Calu3 (cell line): ENCODE measurements at regions of chr3 and their contacts with region 1.

Region 1: GRCh38 chr3:128879125-128879969 is at the start of gene ACAD9:
- DNase-seq: peak; percentile 100
- H3K4me3 Mint-ChIP-seq: peak within 1 kb of the TSS; percentile 81
- H3K27ac Mint-ChIP-seq: peak within 1 kb of the TSS; percentile 84
- H3K4me1 Mint-ChIP-seq: peaks cover 43% of the 10 kb centered on the region
- H3K27me3 Mint-ChIP-seq: peaks cover 12% of the 10 kb centered on the region
- CTCF ChIP-seq: no peak
- total RNA-seq, gene ACAD9: 112 and 124 TPM in 2 replicates

Region 2: GRCh38 chr3:128665362-128666038 is 213.8 kb before region 1 on chr3:
- CTCF ChIA-PET with region 1: no interaction called
- intact Hi-C with region 1: loop called (anchors 10 kb)
- DNase-seq: peak; percentile 22
- H3K4me3 Mint-ChIP-seq: no peak overlapping the region
- H3K27ac Mint-ChIP-seq: no peak overlapping the region
- H3K4me1 Mint-ChIP-seq: peaks cover 8% of the 10 kb centered on the region
- H3K27me3 Mint-ChIP-seq: peaks cover 22% of the 10 kb centered on the region
- CTCF ChIP-seq: no peak

Region 3: DNA sequence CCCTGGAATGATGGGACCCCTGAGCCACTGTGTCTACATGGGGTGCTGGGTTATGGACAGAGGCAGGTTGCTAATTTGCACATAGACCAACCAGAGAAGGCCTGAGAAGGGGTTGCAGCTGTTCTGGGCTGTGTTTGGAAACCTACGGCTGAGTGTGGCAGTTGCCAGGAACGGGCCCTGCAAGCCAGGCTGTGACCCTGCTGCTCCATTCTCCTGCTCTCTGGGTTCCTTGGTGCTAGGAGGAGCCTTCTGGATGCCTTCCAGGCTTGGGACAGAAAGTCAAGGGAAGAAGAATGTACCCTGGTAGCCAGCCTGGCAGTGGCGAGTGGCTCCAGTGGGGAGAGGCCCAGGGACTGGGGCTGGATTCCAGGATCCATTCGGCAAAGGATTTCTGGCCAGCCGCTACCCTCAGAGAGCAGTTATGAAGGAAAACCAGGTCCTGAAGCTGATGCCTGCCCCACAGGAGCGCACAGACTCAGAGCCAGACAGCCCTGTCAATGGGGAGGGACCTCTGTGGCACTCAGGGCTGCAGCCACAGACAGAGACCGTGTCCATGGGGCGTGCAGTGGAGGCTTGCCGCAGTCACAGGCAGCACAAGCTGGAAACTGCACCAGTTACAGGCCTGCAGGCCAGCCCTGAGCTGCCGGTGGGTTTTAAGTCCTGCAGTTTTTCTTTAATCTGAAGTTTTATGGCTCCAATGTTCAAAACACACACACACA is 55.1 kb before region 1 on chr3:
- CTCF ChIA-PET with region 1: no interaction called
- intact Hi-C with region 1: no loop called
- DNase-seq: no peak
- H3K4me3 Mint-ChIP-seq: no peak overlapping the region
- H3K27ac Mint-ChIP-seq: no peak overlapping the region
- H3K4me1 Mint-ChIP-seq: no peaks in the 10 kb centered on the region
- H3K27me3 Mint-ChIP-seq: no peaks in the 10 kb centered on the region
- CTCF ChIP-seq: no peak